IMR-90 (cell line): ENCODE measurements at regions of chr5 and their contacts with region 1.

Region 1: DNA sequence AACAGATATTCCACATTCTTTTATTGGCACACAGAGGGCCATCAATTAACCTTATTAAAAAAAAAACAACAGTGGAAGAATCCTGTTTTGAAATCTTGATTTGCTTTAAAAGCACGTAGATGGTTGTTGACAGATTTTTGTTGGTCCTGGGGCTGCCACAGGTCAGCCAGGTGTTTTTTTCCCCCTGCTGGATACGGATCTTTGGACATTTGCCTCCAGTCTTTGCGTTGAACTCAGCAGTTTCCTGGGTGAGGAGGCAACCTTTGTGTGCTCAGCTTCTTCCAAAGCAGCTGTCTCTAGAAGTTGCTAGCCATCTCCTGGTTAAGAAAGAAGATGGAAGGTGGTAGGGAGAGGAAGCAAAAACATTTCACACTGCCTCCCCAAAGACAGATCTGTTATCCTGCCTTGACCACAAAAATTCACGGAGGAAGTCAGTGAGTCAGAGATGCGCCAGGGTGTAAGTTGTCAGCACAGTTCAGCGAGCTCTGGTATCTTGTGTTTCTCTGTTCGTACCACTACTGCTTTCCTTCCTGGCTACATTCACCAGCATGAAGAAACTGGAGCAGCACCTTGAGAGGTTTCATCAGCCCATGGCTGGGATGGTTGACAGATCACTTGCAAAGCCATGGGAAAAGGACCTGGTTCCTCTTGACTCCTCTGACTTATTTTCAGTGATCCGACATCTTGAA is 207.3 kb downstream of the ARHGAP26 start:
- DNase-seq: peak; percentile 94
- ATAC-seq: peak; percentile 88
- H3K4me3 ChIP-seq: no peak overlapping the region
- H3K27ac ChIP-seq: peak overlapping the region; percentile 59
- H3K4me1 ChIP-seq: peaks cover 24% of the 10 kb centered on the region
- H3K27me3 ChIP-seq: no peaks in the 10 kb centered on the region
- CTCF ChIP-seq: no peak
- POLR2A ChIP-seq: no peak
- RAD21 ChIP-seq: peak; percentile 13; the same call in 1 of the 2 replicates

Region 2: GRCh38 chr5:142959683-142960657 is 17.5 kb before region 1 on chr5:
- CTCF ChIA-PET with region 1: no interaction called
- POLR2A ChIA-PET with region 1: no interaction called
- dilution Hi-C with region 1: no loop called
- in situ Hi-C with region 1: no loop called
- intact Hi-C with region 1: loop called (anchors 2 kb)
- DNase-seq: peak; percentile 86
- ATAC-seq: peak; percentile 85
- H3K4me3 ChIP-seq: no peak overlapping the region
- H3K27ac ChIP-seq: no peak overlapping the region
- H3K4me1 ChIP-seq: peaks cover 10% of the 10 kb centered on the region
- H3K27me3 ChIP-seq: no peaks in the 10 kb centered on the region
- CTCF ChIP-seq: no peak
- POLR2A ChIP-seq: no peak
- RAD21 ChIP-seq: no peak

Region 3: DNA sequence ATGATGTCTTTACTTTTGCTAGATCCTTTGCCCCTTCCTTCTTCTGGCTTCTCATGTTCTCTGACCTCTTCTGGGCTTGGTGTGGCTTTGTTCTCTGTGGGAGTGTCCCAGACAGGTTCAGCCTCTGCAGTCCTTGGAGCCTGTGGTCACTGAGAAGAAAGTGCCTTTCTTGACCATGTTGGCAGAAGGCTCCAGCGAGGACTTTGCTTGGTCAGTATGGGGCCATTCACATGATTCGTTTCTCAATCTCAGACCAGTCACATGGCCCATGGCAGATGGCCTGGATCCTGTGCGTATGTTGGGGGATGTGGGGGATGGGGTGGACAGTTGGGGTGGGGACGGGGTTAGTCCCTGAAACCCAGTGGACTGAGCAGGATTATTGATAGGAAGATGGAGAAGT is 66.8 kb after region 1 on chr5:
- CTCF ChIA-PET with region 1: no interaction called
- POLR2A ChIA-PET with region 1: no interaction called
- dilution Hi-C with region 1: no loop called
- in situ Hi-C with region 1: no loop called
- intact Hi-C with region 1: loop called (anchors 1 kb)
- DNase-seq: no peak
- ATAC-seq: no peak
- H3K4me3 ChIP-seq: no peak overlapping the region
- H3K27ac ChIP-seq: no peak overlapping the region
- H3K4me1 ChIP-seq: peaks cover 4% of the 10 kb centered on the region
- H3K27me3 ChIP-seq: no peaks in the 10 kb centered on the region
- CTCF ChIP-seq: no peak
- POLR2A ChIP-seq: no peak
- RAD21 ChIP-seq: no peak